B cell (primary cell): ENCODE measurements at regions of chr10 and their contacts with region 1.

Region 1: GRCh38 chr10:32332299-32332750 is 14.6 kb downstream of the EPC1 start:
- DNase-seq: peak; percentile 78
- ATAC-seq: peak; percentile 96
- H3K4me3 ChIP-seq: no peak overlapping the region
- H3K4me3 Mint-ChIP-seq: peak overlapping the region; percentile 38
- H3K27ac ChIP-seq: peak overlapping the region; percentile 45 to 73
- H3K27ac Mint-ChIP-seq: peak overlapping the region; percentile 70
- H3K4me1 ChIP-seq: peaks cover 71 to 88% of the 10 kb centered on the region in 2 donors
- H3K4me1 Mint-ChIP-seq: peaks cover 90% of the 10 kb centered on the region
- H3K27me3 ChIP-seq: no peaks in the 10 kb centered on the region
- H3K27me3 Mint-ChIP-seq: no peaks in the 10 kb centered on the region
- CTCF ChIP-seq: no peak

Region 2: DNA sequence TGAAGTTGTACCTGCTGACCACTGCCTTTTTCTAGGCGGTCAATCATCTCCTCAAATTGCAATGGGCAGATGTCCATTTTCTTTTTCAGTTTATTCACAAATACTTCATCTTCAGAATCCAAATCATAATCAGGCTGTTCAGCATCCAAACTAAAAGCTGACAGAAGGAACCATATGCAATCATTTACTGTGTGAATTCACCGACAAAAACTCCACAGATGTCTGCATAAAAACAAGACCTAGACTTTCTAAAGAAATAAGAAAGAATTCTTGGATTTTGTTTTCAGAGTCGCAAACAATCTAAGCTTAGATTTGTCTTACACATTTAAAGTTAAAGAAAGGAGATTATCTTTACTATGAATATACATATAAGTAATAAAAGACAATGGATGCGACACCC is 38.7 kb before region 1 on chr10:
- CTCF ChIA-PET with region 1: interaction called, 3 read pairs
- POLR2A ChIA-PET with region 1: interaction called, 3 read pairs
- intact Hi-C with region 1: loop called (anchors 5 kb)
- DNase-seq: no peak
- ATAC-seq: no peak
- H3K4me3 ChIP-seq: no peak overlapping the region
- H3K4me3 Mint-ChIP-seq: no peak overlapping the region
- H3K27ac ChIP-seq: no peak overlapping the region
- H3K27ac Mint-ChIP-seq: no peak overlapping the region
- H3K4me1 ChIP-seq: no peaks in the 10 kb centered on the region
- H3K4me1 Mint-ChIP-seq: peaks cover 8% of the 10 kb centered on the region
- H3K27me3 ChIP-seq: no peaks in the 10 kb centered on the region
- H3K27me3 Mint-ChIP-seq: no peaks in the 10 kb centered on the region
- CTCF ChIP-seq: no peak

Region 3: DNA sequence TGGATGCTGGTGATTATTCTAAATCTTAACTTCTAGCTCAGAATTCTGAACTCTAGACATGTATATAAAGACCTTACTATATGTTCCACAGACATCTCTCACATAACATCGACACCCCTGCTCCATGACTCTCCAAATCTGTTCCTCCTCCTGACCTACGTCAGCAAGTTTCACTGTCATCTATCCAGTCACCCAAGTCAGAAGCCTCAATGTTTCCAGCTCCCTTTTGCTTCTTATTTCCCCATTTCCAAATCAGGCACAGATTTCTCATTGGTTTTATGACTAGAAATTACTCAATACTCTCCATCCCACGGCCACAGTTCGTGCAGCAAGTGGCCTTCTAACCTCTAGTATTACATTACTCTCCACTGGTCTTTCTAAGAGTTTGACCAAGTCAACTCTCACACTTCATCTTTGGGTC is 13.8 kb before region 1 on chr10:
- CTCF ChIA-PET with region 1: interaction called, 4 read pairs
- POLR2A ChIA-PET with region 1: interaction called, 3 read pairs
- intact Hi-C with region 1: loop called (anchors 2 kb)
- DNase-seq: peak; percentile 51
- ATAC-seq: peak; percentile 46
- H3K4me3 ChIP-seq: peak overlapping the region in 1 of 5 experiments; percentile 20
- H3K4me3 Mint-ChIP-seq: peak overlapping the region; percentile 64
- H3K27ac ChIP-seq: peak overlapping the region; percentile 40 to 66
- H3K27ac Mint-ChIP-seq: peak overlapping the region; percentile 74
- H3K4me1 ChIP-seq: peaks cover 59 to 76% of the 10 kb centered on the region in 2 donors
- H3K4me1 Mint-ChIP-seq: peaks cover 83% of the 10 kb centered on the region
- H3K27me3 ChIP-seq: no peaks in the 10 kb centered on the region
- H3K27me3 Mint-ChIP-seq: no peaks in the 10 kb centered on the region
- CTCF ChIP-seq: no peak

Region 4: GRCh38 chr10:32516567-32517495 is 184.5 kb after region 1 on chr10:
- CTCF ChIA-PET with region 1: no interaction called
- POLR2A ChIA-PET with region 1: no interaction called
- intact Hi-C with region 1: no loop called
- DNase-seq: no peak
- ATAC-seq: no peak
- H3K4me3 ChIP-seq: no peak overlapping the region
- H3K4me3 Mint-ChIP-seq: no peak overlapping the region
- H3K27ac ChIP-seq: no peak overlapping the region
- H3K27ac Mint-ChIP-seq: no peak overlapping the region
- H3K4me1 ChIP-seq: no peaks in the 10 kb centered on the region
- H3K4me1 Mint-ChIP-seq: no peaks in the 10 kb centered on the region
- H3K27me3 ChIP-seq: no peaks in the 10 kb centered on the region
- H3K27me3 Mint-ChIP-seq: no peaks in the 10 kb centered on the region
- CTCF ChIP-seq: no peak